CD8-positive, alpha-beta T cell (primary cell): ENCODE measurements at regions of chr1 and their contacts with region 1.

Region 1: DNA sequence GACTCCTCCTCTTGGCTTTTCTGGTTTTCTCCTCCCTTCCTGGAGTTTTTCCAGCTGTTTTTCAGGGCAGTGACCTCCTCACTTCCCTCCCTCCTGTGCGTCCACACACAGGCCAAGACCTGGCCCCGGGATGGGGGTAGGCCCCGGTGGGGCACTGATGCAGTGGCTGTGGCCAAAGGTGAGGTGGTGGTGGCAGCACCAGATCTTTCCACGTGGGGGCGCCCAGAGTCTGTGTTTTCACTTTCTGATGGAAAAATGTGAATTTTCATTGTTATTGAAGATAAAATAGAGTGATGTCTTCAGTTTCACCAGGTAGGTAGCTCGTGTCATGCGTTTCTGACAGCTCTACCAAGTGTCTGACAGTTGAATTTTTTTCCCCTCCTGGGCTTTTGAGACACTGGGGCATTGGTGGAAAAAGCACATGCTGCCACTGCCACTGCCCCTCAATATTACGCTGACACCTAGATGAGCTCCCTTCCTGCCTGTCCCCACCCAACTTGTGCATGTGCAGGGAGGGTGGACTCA is 39.9 kb upstream of the MAGOH start:
- DNase-seq: peak; percentile 51 to 86 (median 66)
- ATAC-seq: peak; percentile 81
- H3K4me3 ChIP-seq: no peak overlapping the region
- H3K4me3 Mint-ChIP-seq: no peak overlapping the region
- H3K27ac ChIP-seq: no peak overlapping the region
- H3K27ac Mint-ChIP-seq: no peak overlapping the region
- H3K4me1 ChIP-seq: no peaks in the 10 kb centered on the region
- H3K4me1 Mint-ChIP-seq: peaks cover 2% of the 10 kb centered on the region
- H3K27me3 ChIP-seq: no peaks in the 10 kb centered on the region
- H3K27me3 Mint-ChIP-seq: no peaks in the 10 kb centered on the region
- CTCF ChIP-seq: peak; percentile 94

Region 2: DNA sequence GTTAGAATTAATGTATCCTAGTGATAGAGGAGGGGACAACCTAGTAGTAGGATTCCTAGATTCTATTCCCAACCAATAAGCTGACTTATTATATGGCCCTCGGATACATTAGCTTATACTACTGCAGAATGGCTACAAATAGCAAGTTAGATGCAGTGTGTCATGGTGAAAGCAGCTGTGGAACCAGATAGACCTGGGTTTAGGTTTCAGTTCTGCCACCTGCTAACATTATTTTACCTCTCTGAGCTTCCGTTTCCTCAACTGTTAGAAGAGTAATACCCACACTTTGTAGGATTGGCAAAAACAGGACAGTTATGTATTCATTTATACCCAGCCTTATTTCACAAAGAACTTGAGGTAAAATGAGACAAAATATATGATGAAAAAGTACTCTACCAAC is 18.3 kb before region 1 on chr1:
- CTCF ChIA-PET with region 1: interaction called, 32 read pairs
- POLR2A ChIA-PET with region 1: no interaction called
- intact Hi-C with region 1: no loop called
- DNase-seq: no peak
- ATAC-seq: no peak
- H3K4me3 ChIP-seq: no peak overlapping the region
- H3K4me3 Mint-ChIP-seq: no peak overlapping the region
- H3K27ac ChIP-seq: no peak overlapping the region
- H3K27ac Mint-ChIP-seq: no peak overlapping the region
- H3K4me1 ChIP-seq: no peaks in the 10 kb centered on the region
- H3K4me1 Mint-ChIP-seq: no peaks in the 10 kb centered on the region
- H3K27me3 ChIP-seq: no peaks in the 10 kb centered on the region
- H3K27me3 Mint-ChIP-seq: no peaks in the 10 kb centered on the region
- CTCF ChIP-seq: no peak

Region 3: DNA sequence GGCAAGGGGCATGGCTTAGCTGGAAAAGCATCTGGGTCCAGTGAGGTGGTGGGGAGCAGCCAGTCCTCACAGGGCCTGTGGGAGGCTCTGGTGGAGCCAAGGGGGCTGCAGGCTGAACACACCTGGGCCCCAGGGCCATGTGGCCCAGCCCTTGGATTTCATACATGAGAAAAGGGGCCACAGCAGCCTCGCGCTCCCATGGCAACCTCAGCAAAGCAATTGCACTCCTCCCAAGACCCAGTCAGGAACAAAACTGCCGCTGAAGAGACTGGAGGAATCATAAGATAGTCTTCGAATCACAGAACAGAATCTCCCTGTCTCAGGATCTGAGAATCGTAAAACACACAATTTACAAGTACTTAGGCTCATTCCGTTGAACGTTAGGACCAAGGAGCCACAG is 25.0 kb after region 1 on chr1:
- CTCF ChIA-PET with region 1: interaction called, 10 read pairs
- POLR2A ChIA-PET with region 1: no interaction called
- intact Hi-C with region 1: no loop called
- DNase-seq: no peak
- ATAC-seq: no peak
- H3K4me3 ChIP-seq: no peak overlapping the region
- H3K4me3 Mint-ChIP-seq: no peak overlapping the region
- H3K27ac ChIP-seq: no peak overlapping the region
- H3K27ac Mint-ChIP-seq: no peak overlapping the region
- H3K4me1 ChIP-seq: peaks cover 4% of the 10 kb centered on the region
- H3K4me1 Mint-ChIP-seq: peaks cover 12% of the 10 kb centered on the region
- H3K27me3 ChIP-seq: no peaks in the 10 kb centered on the region
- H3K27me3 Mint-ChIP-seq: no peaks in the 10 kb centered on the region
- CTCF ChIP-seq: no peak

Region 4: GRCh38 chr1:53381790-53382401 is 103.6 kb after region 1 on chr1:
- CTCF ChIA-PET with region 1: interaction called, 458 read pairs
- POLR2A ChIA-PET with region 1: no interaction called
- intact Hi-C with region 1: no loop called
- DNase-seq: no peak
- ATAC-seq: no peak
- H3K4me3 ChIP-seq: no peak overlapping the region
- H3K4me3 Mint-ChIP-seq: no peak overlapping the region
- H3K27ac ChIP-seq: no peak overlapping the region
- H3K27ac Mint-ChIP-seq: no peak overlapping the region
- H3K4me1 ChIP-seq: no peaks in the 10 kb centered on the region
- H3K4me1 Mint-ChIP-seq: peaks cover 2% of the 10 kb centered on the region
- H3K27me3 ChIP-seq: no peaks in the 10 kb centered on the region
- H3K27me3 Mint-ChIP-seq: no peaks in the 10 kb centered on the region
- CTCF ChIP-seq: no peak

Region 5: DNA sequence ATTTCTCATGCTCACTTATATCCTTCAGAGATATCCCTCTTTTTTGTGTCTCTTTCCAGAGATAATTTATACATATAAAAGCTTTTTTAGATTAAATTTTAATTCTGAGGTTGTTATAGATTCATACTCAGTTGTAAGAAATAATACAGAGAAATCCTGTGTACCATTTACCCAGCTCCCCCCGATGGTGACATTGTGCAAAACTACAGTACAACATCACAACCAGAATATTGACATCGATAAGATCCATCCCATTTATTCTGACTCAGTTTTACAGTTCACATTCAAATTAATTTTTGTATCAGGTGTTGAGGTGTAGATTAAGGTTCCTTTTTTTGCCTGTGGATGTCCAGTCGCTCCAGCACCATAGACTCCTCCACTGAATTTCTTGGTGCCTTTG is 195.2 kb after region 1 on chr1:
- CTCF ChIA-PET with region 1: interaction called, 28 read pairs
- POLR2A ChIA-PET with region 1: no interaction called
- intact Hi-C with region 1: loop called (anchors 1 to 2 kb)
- DNase-seq: no peak
- ATAC-seq: no peak
- H3K4me3 ChIP-seq: no peak overlapping the region
- H3K4me3 Mint-ChIP-seq: no peak overlapping the region
- H3K27ac ChIP-seq: no peak overlapping the region
- H3K27ac Mint-ChIP-seq: no peak overlapping the region
- H3K4me1 ChIP-seq: no peaks in the 10 kb centered on the region
- H3K4me1 Mint-ChIP-seq: no peaks in the 10 kb centered on the region
- H3K27me3 ChIP-seq: no peaks in the 10 kb centered on the region
- H3K27me3 Mint-ChIP-seq: peaks cover under 1% of the 10 kb centered on the region
- CTCF ChIP-seq: peak; percentile 22

Region 6: GRCh38 chr1:53508991-53509666 is 230.9 kb after region 1 on chr1:
- CTCF ChIA-PET with region 1: no interaction called
- POLR2A ChIA-PET with region 1: no interaction called
- intact Hi-C with region 1: no loop called
- DNase-seq: peak in 2 of 9 experiments; percentile 38 to 40
- ATAC-seq: no peak
- H3K4me3 ChIP-seq: no peak overlapping the region
- H3K4me3 Mint-ChIP-seq: no peak overlapping the region
- H3K27ac ChIP-seq: no peak overlapping the region
- H3K27ac Mint-ChIP-seq: no peak overlapping the region
- H3K4me1 ChIP-seq: no peaks in the 10 kb centered on the region
- H3K4me1 Mint-ChIP-seq: no peaks in the 10 kb centered on the region
- H3K27me3 ChIP-seq: no peaks in the 10 kb centered on the region
- H3K27me3 Mint-ChIP-seq: no peaks in the 10 kb centered on the region
- CTCF ChIP-seq: no peak

Region 7: GRCh38 chr1:53754484-53755312 is 476.4 kb after region 1 on chr1:
- CTCF ChIA-PET with region 1: interaction called, 9 read pairs
- POLR2A ChIA-PET with region 1: no interaction called
- intact Hi-C with region 1: loop called in 1 of 2 experiments (anchors 2 kb)
- DNase-seq: peak in 3 of 9 experiments; percentile 17 to 53 (median 49)
- ATAC-seq: no peak
- H3K4me3 ChIP-seq: no peak overlapping the region
- H3K4me3 Mint-ChIP-seq: no peak overlapping the region
- H3K27ac ChIP-seq: no peak overlapping the region
- H3K27ac Mint-ChIP-seq: no peak overlapping the region
- H3K4me1 ChIP-seq: no peaks in the 10 kb centered on the region
- H3K4me1 Mint-ChIP-seq: no peaks in the 10 kb centered on the region
- H3K27me3 ChIP-seq: no peaks in the 10 kb centered on the region
- H3K27me3 Mint-ChIP-seq: no peaks in the 10 kb centered on the region
- CTCF ChIP-seq: peak; percentile 40

Region 8: GRCh38 chr1:54944610-54945544 is 1666.6 kb after region 1 on chr1:
- CTCF ChIA-PET with region 1: no interaction called
- POLR2A ChIA-PET with region 1: no interaction called
- intact Hi-C with region 1: no loop called
- DNase-seq: peak; percentile 36 to 80 (median 59)
- ATAC-seq: peak; percentile 65
- H3K4me3 ChIP-seq: no peak overlapping the region
- H3K4me3 Mint-ChIP-seq: no peak overlapping the region
- H3K27ac ChIP-seq: no peak overlapping the region
- H3K27ac Mint-ChIP-seq: no peak overlapping the region
- H3K4me1 ChIP-seq: no peaks in the 10 kb centered on the region
- H3K4me1 Mint-ChIP-seq: peaks cover 6% of the 10 kb centered on the region
- H3K27me3 ChIP-seq: no peaks in the 10 kb centered on the region
- H3K27me3 Mint-ChIP-seq: peaks cover 5% of the 10 kb centered on the region
- CTCF ChIP-seq: peak; percentile 76

Region 9: GRCh38 chr1:54965624-54966340 is 1687.5 kb after region 1 on chr1:
- CTCF ChIA-PET with region 1: no interaction called
- POLR2A ChIA-PET with region 1: no interaction called
- intact Hi-C with region 1: no loop called
- DNase-seq: peak in 2 of 9 experiments; percentile 19 to 38
- ATAC-seq: no peak
- H3K4me3 ChIP-seq: no peak overlapping the region
- H3K4me3 Mint-ChIP-seq: no peak overlapping the region
- H3K27ac ChIP-seq: no peak overlapping the region
- H3K27ac Mint-ChIP-seq: no peak overlapping the region
- H3K4me1 ChIP-seq: no peaks in the 10 kb centered on the region
- H3K4me1 Mint-ChIP-seq: peaks cover 4% of the 10 kb centered on the region
- H3K27me3 ChIP-seq: no peaks in the 10 kb centered on the region
- H3K27me3 Mint-ChIP-seq: peaks cover 25% of the 10 kb centered on the region
- CTCF ChIP-seq: no peak